ENCODE measurements at regions of chr20 and their contacts with region 1.

Region 1: DNA sequence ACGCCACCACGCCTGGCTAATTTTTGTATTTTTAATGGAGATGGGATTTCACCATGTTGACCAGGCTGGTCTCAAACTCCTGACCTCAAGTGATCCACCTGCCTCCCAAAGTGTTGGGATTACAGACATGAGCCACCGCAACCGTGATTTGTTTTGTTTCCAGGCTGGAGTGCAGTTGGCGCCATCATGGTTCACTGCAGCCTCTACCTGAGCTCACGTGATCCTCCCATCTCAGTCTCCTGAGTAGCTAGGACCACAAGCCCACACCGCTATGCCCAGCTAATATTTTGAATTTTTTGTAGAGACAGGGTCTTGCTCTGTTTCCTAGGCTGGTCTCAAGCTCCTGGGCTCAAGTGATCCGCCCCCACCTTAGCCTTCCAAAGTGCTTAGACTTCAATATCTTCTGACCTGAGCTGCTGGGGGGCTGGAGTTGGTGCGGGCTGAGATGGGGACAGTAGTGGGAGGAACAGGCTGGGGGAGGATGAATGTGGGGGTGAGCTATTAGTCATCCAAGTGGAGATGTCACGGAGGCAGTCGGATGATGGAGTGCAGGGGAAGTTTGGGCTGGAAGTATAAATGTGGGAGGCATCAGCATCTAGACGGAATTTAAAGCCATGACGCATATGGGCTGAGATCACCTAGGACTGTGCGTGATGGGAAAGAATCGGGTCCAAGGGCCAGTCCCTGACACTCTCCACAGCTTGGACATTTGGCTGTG is 23.1 kb upstream of the ZMYND8 start:
- DNase-seq: no peak
- H3K4me3 ChIP-seq: no peak overlapping the region
- H3K27ac ChIP-seq: no peak overlapping the region
- H3K4me1 ChIP-seq: peaks cover 21% of the 10 kb centered on the region
- H3K27me3 ChIP-seq: no peaks in the 10 kb centered on the region
- CTCF ChIP-seq: no peak

Region 2: GRCh38 chr20:46752728-46753127 is 626.9 kb before region 1 on chr20:
- CTCF ChIA-PET with region 1: interaction called, 5 read pairs
- POLR2A ChIA-PET with region 1: no interaction called
- intact Hi-C with region 1: loop called (anchors 1 kb)
- DNase-seq: peak in 1 of 2 experiments; percentile 65
- H3K4me3 ChIP-seq: no peak overlapping the region
- H3K27ac ChIP-seq: no peak overlapping the region
- H3K4me1 ChIP-seq: peaks cover under 1% of the 10 kb centered on the region
- H3K27me3 ChIP-seq: no peaks in the 10 kb centered on the region
- CTCF ChIP-seq: peak; percentile 95

Region 3: GRCh38 chr20:47272893-47273590 is 106.5 kb before region 1 on chr20:
- CTCF ChIA-PET with region 1: interaction called, 47 read pairs
- POLR2A ChIA-PET with region 1: interaction called, 3 read pairs
- intact Hi-C with region 1: loop called (anchors 1 kb)
- DNase-seq: peak; percentile 53 to 58
- H3K4me3 ChIP-seq: no peak overlapping the region
- H3K27ac ChIP-seq: no peak overlapping the region
- H3K4me1 ChIP-seq: peaks cover 40% of the 10 kb centered on the region
- H3K27me3 ChIP-seq: no peaks in the 10 kb centered on the region
- CTCF ChIP-seq: peak; percentile 97

Region 4: DNA sequence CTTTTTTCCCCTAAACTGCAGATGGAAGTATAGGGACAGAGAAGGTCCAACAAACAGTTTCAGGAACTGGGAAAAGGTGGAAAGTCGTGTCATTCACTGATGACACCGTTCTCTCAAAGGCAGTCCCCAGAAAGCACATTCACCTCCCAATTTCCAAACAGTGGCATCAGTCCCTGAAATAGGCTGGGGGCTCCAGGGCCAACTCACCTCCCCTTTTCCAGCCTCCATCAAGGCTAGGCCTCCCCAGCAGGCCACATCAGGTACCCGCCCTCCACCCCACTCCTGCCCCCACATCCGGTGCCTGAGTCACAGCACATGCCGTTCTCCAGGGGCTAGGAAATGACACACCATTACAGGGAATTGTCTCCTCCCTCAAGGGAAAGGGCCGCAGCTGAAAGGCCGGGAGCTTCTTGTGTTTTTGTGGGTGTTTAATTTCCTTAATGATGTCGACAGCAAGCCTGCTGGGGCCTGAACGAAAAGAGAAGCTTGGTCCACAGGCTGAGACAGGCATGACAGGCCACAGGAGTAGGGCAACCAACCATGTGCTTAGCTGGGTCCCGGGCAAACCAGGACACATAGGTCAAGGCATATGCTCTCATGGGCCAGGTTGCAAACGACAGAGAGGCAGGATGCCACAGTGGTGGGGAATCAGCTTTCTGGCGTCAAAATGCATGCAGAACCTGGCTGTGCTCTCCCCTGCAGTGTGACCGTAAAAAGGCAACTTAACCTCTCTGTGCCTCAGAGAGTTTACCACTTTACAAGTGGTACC is 62.3 kb before region 1 on chr20:
- CTCF ChIA-PET with region 1: interaction called, 16 read pairs
- POLR2A ChIA-PET with region 1: interaction called, 4 read pairs
- intact Hi-C with region 1: loop called (anchors 5 kb)
- DNase-seq: peak; percentile 77 to 96
- H3K4me3 ChIP-seq: peak overlapping the region; percentile 56; the same call in 1 of the 2 replicates
- H3K27ac ChIP-seq: peak overlapping the region; percentile 97
- H3K4me1 ChIP-seq: peaks cover 85% of the 10 kb centered on the region
- H3K27me3 ChIP-seq: no peaks in the 10 kb centered on the region
- CTCF ChIP-seq: no peak

Region 5: DNA sequence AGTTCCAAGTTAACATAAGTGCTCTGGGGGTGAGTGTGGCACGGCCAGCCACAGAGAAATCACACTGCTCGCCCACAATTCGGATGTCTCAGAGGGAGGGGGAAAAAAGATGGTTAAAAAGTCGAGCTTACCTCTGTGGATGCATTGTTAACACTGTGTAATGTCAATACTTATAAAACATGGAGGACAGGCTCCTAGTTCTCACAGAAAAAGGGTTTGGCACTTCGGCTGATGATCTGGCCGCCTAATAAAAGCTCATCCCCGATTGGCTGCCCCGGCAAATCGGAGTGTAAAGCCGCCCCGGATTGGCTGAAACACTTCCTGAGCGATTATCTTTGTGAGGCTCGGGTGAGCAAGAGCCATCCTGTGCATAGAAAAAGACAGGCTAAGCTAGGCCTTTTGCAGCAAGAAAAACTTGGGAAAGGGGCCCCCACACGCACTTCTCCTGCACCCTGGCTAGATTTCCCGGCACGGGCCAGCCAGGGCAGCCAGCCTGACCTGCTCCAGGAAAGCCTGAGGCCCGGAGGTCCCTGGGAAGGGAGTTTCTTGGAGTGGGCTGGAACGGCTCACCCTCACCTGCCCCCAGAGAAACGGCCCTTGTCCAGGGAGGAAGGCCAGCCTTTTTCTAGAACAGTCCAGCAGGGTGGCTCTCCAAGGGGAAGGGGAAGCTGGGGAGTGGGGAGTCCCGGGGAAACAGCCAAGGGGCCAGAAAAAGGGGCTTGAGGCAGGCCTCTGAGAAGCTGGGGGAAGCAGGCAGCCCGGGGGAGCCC is 22.9 kb before region 1 on chr20 and contains the start of gene ZMYND8:
- CTCF ChIA-PET with region 1: interaction called, 17 read pairs
- POLR2A ChIA-PET with region 1: interaction called, 16 read pairs
- intact Hi-C with region 1: no loop called
- DNase-seq: peak; percentile 94 to 99
- H3K4me3 ChIP-seq: peak within 1 kb of the TSS; percentile 60
- H3K27ac ChIP-seq: peak within 1 kb of the TSS; percentile 99
- H3K4me1 ChIP-seq: peaks cover 86% of the 10 kb centered on the region
- H3K27me3 ChIP-seq: no peaks in the 10 kb centered on the region
- CTCF ChIP-seq: no peak
- total RNA-seq, gene ZMYND8: 72.3 and 107 TPM in 2 replicates

Region 6: DNA sequence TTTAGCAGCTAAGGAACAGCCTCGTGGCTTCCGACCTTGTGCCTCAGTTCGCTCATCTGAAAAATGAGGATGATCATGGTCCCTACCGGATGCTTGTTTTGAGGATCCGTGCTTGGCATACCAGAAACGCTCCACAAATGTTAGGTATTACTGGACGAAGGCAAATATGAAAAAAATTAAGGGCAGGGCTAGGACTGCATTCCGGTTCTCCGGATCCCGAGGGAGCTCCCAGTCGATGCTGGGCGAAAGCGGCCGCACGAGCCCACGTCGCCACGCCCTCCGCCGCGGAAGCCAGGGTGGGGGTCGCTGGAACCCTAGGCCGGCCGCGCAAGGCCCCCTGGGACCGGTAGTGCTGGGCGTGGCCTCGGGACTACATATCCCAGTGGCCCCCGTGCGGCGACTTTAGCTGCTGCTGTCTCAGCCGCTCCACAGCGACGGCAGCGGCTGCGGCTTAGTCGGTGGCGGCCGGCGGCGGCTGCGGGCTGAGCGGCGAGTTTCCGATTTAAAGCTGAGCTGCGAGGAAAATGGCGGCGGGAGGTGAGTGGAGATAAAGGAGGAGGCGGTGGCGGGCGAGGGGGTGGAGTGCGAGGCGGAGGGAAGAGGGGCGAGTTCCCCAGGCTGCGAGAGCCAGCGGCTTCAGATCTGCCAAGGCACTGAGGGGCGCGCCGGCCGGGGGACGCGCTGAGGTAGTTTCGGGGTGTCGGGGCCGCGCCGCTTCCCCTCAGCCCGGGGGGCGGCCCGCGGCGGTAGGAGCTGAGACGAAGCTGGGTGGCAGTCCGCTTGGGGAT is 122.1 kb after region 1 on chr20 and contains the start of gene NCOA3:
- CTCF ChIA-PET with region 1: interaction called, 8 read pairs
- POLR2A ChIA-PET with region 1: interaction called, 31 read pairs
- intact Hi-C with region 1: loop called (anchors 2 kb)
- DNase-seq: peak; percentile 90 to 98
- H3K4me3 ChIP-seq: peak within 1 kb of the TSS; percentile 77
- H3K27ac ChIP-seq: peak within 1 kb of the TSS; percentile 90
- H3K4me1 ChIP-seq: peaks cover 56% of the 10 kb centered on the region
- H3K27me3 ChIP-seq: no peaks in the 10 kb centered on the region
- CTCF ChIP-seq: peak; percentile 68
- total RNA-seq, gene NCOA3: 40.3 and 78.0 TPM in 2 replicates

Region 7: GRCh38 chr20:47686545-47686944 is 307.0 kb after region 1 on chr20:
- CTCF ChIA-PET with region 1: no interaction called
- POLR2A ChIA-PET with region 1: no interaction called
- intact Hi-C with region 1: no loop called
- DNase-seq: peak in 1 of 2 experiments; percentile 19
- H3K4me3 ChIP-seq: no peak overlapping the region
- H3K27ac ChIP-seq: no peak overlapping the region
- H3K4me1 ChIP-seq: no peaks in the 10 kb centered on the region
- H3K27me3 ChIP-seq: no peaks in the 10 kb centered on the region
- CTCF ChIP-seq: no peak

Measured in PC-9 (cell line).